ENCODE measurements at regions of chr17 and their contacts with region 1.

Region 1: GRCh38 chr17:50689956-50690886 is 17.5 kb downstream of the ANKRD40 start:
- DNase-seq: no peak
- ATAC-seq: no peak
- H3K4me3 ChIP-seq: no peak overlapping the region
- H3K27ac ChIP-seq: no peak overlapping the region
- H3K4me1 ChIP-seq: peaks cover 67% of the 10 kb centered on the region
- H3K27me3 ChIP-seq: no peaks in the 10 kb centered on the region
- CTCF ChIP-seq: no peak

Region 2: GRCh38 chr17:50534222-50534978 is 155.8 kb before region 1 on chr17:
- intact Hi-C with region 1: no loop called
- DNase-seq: peak; percentile 56
- ATAC-seq: peak; percentile 76 to 82
- H3K4me3 ChIP-seq: no peak overlapping the region
- H3K27ac ChIP-seq: no peak overlapping the region
- H3K4me1 ChIP-seq: peaks cover 29% of the 10 kb centered on the region
- H3K27me3 ChIP-seq: peaks cover 40% of the 10 kb centered on the region
- CTCF ChIP-seq: peak; percentile 34

Region 3: DNA sequence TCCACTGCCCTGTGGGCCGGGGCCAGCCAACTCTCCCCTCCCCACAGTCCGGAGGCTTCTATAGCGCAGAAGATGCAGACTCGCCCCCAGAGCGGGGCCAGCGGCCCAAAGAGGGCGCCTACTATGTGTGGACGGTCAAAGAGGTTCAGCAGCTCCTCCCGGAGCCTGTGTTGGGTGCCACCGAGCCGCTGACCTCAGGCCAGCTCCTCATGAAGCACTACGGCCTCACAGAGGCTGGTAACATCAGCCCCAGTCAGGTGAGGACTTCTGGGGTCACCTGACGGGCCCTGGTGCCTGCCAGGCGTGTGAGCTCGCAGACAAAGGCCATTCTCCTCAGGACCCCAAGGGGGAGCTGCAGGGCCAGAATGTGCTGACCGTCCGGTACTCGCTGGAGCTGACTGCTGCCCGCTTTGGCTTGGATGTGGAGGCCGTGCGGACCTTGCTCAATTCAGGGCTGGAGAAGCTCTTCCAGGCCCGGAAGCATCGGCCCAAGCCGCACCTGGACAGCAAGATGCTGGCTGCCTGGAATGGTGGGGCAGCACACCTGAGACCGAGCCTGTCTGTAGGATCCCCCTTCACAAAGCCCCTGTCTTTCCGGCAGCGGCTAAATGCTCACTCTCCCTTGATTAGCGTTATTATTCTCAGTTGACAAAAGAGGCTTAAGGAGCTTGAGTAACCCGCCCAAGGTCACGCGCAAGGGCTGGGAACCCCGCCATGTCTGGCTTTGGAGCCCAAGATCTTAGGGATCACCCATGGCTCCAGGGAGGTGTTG is 139.4 kb before region 1 on chr17:
- intact Hi-C with region 1: loop called (anchors 10 kb)
- DNase-seq: peak; percentile 85
- ATAC-seq: peak; percentile 77 to 78
- H3K4me3 ChIP-seq: no peak overlapping the region
- H3K27ac ChIP-seq: no peak overlapping the region
- H3K4me1 ChIP-seq: peaks cover 18% of the 10 kb centered on the region
- H3K27me3 ChIP-seq: no peaks in the 10 kb centered on the region
- CTCF ChIP-seq: peak; percentile 85

Region 4: DNA sequence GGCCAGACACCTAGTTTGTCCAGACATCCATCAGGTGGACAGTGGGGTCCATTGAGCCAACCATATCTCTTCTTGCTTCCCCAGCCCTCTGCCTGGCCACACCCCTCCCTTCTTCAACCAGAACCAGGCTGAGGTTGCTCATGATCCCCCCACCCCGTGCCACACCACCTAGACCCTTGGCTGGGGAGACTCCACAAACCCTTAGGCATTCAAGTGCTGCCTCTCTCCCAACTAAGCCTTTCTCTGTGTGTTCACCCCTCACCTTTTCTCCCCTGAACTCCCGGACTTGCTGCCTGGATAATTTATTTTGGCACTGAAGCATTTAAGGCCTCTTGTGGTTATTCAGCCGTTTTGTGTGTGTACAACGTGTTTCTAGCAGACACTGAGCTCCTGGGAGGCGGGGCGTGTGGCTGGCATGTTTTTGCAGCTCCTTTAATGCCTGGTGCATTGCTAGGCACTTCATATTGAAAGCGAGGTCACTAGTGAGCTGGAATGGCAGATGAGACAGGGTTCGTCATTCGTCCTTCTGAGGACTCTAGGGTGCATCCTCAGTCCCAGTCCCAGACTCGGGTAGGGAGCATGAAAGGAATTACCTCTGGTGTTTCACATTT is 101.0 kb before region 1 on chr17:
- intact Hi-C with region 1: no loop called
- DNase-seq: no peak
- ATAC-seq: no peak
- H3K4me3 ChIP-seq: no peak overlapping the region
- H3K27ac ChIP-seq: no peak overlapping the region
- H3K4me1 ChIP-seq: peaks cover 13% of the 10 kb centered on the region
- H3K27me3 ChIP-seq: no peaks in the 10 kb centered on the region
- CTCF ChIP-seq: no peak

Region 5: DNA sequence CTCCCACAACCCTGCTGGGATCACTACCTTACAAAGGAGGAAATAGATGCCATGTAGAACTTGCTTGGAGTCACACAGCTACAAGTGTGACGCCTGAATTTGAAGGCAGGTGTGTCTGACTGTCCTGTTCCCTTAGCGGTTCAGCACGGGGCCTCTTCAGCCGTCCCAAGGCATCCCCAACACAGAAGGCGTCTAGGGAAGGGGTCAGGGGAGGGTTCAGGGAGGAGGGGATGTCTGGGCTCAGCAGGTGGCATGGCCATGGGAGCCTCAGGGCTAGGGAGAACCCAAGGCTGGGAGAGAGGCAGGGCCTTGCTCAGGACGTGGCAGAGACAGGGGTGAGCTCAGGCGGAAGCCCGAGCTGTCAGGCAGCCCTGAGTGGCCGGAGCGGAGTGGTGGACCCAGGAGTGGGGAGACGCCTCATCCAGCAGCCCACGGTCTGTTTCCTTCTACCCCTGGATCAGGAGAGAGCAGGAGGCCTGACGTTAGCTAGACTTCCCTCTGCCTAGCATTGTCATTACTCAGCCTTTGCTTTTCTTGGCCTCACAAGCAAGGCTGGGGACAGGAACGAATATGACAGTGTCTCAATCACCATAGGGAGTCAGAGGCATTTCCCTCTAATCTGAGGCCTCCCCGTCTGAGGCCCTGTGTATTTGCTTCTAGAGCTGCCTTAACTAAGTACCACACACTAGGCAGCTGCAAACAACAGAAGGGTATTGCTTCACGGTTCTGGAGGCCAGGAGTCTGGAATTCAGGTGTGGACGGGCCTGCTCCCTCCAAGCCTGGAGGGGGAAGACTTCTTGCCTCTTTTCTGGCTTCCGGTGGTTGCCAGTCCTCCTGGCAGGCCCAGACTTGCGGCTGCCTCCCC is 108.4 kb after region 1 on chr17:
- intact Hi-C with region 1: no loop called
- DNase-seq: no peak
- ATAC-seq: peak in 1 of 2 donors; percentile 12
- H3K4me3 ChIP-seq: no peak overlapping the region
- H3K27ac ChIP-seq: no peak overlapping the region
- H3K4me1 ChIP-seq: no peaks in the 10 kb centered on the region
- H3K27me3 ChIP-seq: no peaks in the 10 kb centered on the region
- CTCF ChIP-seq: no peak

Measured in lower lobe of right lung (tissue), 2 donors.